Heart left ventricle (tissue), 16 donors: ENCODE measurements at regions of chr16 and their contacts with region 1.

Region 1: GRCh38 chr16:21283521-21284289 is 5.6 kb upstream of the CRYM start:
- DNase-seq: peak; percentile 45 to 81 (median 70)
- ATAC-seq: peak; percentile 69 to 96 (median 94)
- H3K4me3 ChIP-seq: peak overlapping the region; percentile 14 to 65 (median 54)
- H3K27ac ChIP-seq: peak overlapping the region in 11 of 12 donors; percentile 32 to 85 (median 71)
- H3K4me1 ChIP-seq: peaks cover 0 to 16% (median 2%) of the 10 kb centered on the region in 12 donors
- H3K27me3 ChIP-seq: peaks cover 0 to 52% (median 9%) of the 10 kb centered on the region in 9 donors
- CTCF ChIP-seq: peak; percentile 33 to 76 (median 46)
- POLR2A ChIP-seq: no peak

Region 2: GRCh38 chr16:21145738-21146137 is 138.0 kb before region 1 on chr16:
- intact Hi-C with region 1: no loop called
- DNase-seq: no peak
- ATAC-seq: no peak
- H3K4me3 ChIP-seq: no peak overlapping the region
- H3K27ac ChIP-seq: no peak overlapping the region
- H3K4me1 ChIP-seq: peaks cover 0 to 7% (median 4%) of the 10 kb centered on the region in 12 donors
- H3K27me3 ChIP-seq: peaks cover 0 to 4% (median 0%) of the 10 kb centered on the region in 9 donors
- CTCF ChIP-seq: no peak
- POLR2A ChIP-seq: no peak

Region 3: DNA sequence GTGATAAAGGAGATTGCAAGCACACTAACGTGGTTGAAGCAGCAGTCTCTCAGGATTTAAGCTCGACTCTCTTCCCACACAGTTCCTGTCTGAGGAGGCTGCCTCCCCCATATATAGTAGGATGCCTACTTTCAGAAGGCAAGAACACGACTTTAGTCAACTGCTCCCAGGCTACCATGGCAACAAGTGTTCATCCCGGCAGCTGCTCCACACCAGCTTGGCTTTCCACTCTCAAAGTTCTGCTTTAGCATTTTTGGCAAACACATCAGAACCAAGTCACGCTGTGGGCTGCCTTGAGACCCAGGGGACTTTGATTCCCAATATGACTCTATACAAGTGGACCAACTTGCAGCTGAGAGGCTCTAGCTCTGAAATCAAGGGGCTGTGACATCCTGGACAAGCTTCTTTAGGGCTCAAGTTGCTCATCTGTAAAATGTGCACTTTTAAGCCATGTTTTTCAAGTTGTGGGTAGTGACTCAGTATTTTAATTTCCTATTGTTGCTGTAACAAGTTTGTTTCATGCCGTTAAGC is 88.9 kb before region 1 on chr16:
- intact Hi-C with region 1: loop called in 1 of 10 experiments (anchors 5 kb)
- DNase-seq: no peak
- ATAC-seq: no peak
- H3K4me3 ChIP-seq: no peak overlapping the region
- H3K27ac ChIP-seq: no peak overlapping the region
- H3K4me1 ChIP-seq: no peaks in the 10 kb centered on the region
- H3K27me3 ChIP-seq: peaks cover 0 to 3% (median 0%) of the 10 kb centered on the region in 9 donors
- CTCF ChIP-seq: no peak
- POLR2A ChIP-seq: no peak

Region 4: GRCh38 chr16:21260870-21261791 is 22.6 kb before region 1 on chr16:
- intact Hi-C with region 1: loop called in 1 of 10 experiments (anchors 2 kb)
- DNase-seq: peak in 1 of 5 donors; percentile 73
- ATAC-seq: peak in 3 of 4 donors; percentile 10 to 67 (median 35)
- H3K4me3 ChIP-seq: no peak overlapping the region
- H3K27ac ChIP-seq: peak overlapping the region in 10 of 12 donors; percentile 2 to 87 (median 56)
- H3K4me1 ChIP-seq: peaks cover 0 to 47% (median 19%) of the 10 kb centered on the region in 12 donors
- H3K27me3 ChIP-seq: no peaks in the 10 kb centered on the region
- CTCF ChIP-seq: no peak
- POLR2A ChIP-seq: no peak